ENCODE measurements at regions of chrX and their contacts with region 1.

Region 1: DNA sequence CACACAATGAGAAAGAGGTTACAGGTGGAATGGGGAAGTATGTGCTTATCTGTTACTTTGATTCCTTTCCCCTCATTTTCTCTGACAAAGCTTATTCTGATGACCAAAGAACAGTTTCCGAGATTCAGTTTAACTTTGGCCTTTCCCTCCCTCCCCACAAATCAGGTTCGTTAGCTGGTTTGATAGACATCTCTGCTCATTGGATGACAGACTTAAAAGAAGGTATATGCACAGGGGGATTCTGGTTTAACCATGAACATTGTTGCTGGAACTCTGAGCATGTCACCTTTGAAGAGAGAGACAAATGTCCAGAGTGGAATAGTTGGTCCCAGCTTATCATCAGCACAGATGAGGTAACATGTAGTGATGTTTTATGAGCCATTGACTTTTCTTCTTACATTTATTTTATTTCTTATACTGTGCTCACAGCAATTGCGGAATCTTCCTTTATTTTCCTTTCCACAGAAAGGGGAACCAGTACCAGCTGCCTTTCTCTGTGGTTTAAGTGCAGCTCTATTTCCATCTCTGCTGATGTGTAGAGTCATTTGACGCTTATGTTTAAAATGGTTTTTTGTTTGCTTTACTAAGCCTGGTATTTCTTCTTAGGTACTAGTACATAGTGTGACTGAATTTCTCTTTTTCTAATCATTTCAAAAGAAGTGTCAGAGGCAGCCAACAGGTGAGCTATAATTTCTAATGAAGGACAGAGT is 125.0 kb downstream of the AKAP4 start:
- DNase-seq: no peak
- ATAC-seq: peak in 1 of 4 donors; percentile 18
- H3K4me3 ChIP-seq: no peak overlapping the region
- H3K27ac ChIP-seq: no peak overlapping the region
- H3K4me1 ChIP-seq: no peaks in the 10 kb centered on the region
- H3K27me3 ChIP-seq: peaks cover 0 to 5% (median 0%) of the 10 kb centered on the region in 4 donors
- CTCF ChIP-seq: no peak

Region 2: GRCh38 chrX:49754233-49754857 is 321.4 kb before region 1 on chrX:
- intact Hi-C with region 1: no loop called
- DNase-seq: peak in 3 of 6 donors; percentile 6 to 36 (median 24)
- ATAC-seq: peak in 3 of 4 donors; percentile 74 to 86 (median 79)
- H3K4me3 ChIP-seq: no peak overlapping the region
- H3K27ac ChIP-seq: no peak overlapping the region
- H3K4me1 ChIP-seq: no peaks in the 10 kb centered on the region
- H3K27me3 ChIP-seq: peaks cover 0 to 38% (median 6%) of the 10 kb centered on the region in 4 donors
- CTCF ChIP-seq: peak; percentile 11 to 58 (median 40)

Region 3: DNA sequence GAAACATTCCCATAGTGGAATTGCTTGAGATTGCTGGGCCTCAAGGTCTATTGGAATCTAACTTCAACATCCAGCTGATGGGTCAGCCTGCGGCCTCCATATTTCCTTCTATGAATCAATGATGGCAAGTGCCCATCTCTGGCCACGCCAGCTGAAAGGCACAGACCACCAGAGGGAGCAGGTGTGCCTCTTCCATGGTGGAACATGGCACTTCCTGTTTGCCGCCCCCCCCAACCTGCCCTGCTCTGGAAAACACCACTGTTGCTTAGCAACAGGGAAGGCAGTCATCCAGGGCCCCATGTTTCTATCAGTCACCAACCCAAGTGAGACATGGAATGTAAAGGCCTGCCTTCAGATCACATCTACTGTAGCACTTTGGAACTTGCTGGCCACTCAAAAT is 235.1 kb before region 1 on chrX:
- intact Hi-C with region 1: no loop called
- DNase-seq: peak; percentile 76 to 86 (median 83)
- ATAC-seq: peak; percentile 84 to 97 (median 90)
- H3K4me3 ChIP-seq: no peak overlapping the region
- H3K27ac ChIP-seq: no peak overlapping the region
- H3K4me1 ChIP-seq: no peaks in the 10 kb centered on the region
- H3K27me3 ChIP-seq: peaks cover 0 to 19% (median 1%) of the 10 kb centered on the region in 4 donors
- CTCF ChIP-seq: peak in 3 of 4 donors; percentile 21 to 32 (median 29)

Region 4: DNA sequence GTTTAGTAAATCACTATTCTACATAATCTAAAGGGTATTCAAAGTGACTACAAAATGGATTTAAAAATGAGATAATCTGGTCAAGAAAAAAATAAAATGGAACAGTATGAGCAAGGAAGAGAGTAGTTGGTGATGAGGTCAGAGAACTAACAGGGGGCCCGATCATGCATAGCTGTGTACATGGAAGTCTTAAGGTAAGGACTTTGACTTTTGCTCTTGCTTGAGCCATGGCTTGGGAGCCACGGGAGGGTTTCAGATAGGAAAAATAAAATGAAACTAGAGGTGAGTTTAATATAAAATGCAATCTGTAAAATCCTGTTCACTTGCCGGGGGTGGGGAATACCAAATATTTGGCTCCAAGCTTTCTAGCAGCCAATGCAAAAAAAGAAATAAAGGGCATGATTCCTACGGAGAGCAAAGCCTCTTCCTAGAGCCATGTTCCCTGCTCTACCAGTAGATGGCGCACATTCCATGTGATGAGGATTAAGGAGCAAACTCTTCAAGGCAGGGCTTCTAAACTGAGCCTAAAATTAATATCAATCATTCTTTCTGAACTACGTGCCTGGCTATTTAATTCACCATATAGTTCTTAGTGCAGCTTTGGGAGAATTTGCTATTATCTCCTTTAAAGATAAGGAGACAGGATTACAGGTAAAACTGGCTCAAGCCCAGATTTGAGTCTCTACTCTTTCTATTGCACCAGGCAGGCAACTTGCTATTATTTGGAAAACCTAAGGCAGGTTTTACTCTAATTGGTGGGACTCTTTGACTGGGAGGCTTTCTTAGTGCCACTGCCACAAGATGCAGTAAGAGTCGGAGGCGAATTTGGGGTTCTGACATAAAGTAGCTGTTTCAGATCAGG is 160.2 kb before region 1 on chrX:
- intact Hi-C with region 1: loop called in 1 of 3 experiments (anchors 10 kb)
- DNase-seq: peak in 3 of 6 donors; percentile 21 to 47 (median 24)
- ATAC-seq: peak; percentile 53 to 92 (median 85)
- H3K4me3 ChIP-seq: no peak overlapping the region
- H3K27ac ChIP-seq: no peak overlapping the region
- H3K4me1 ChIP-seq: no peaks in the 10 kb centered on the region
- H3K27me3 ChIP-seq: no peaks in the 10 kb centered on the region
- CTCF ChIP-seq: peak; percentile 70 to 82 (median 73)

Measured in pancreas (tissue), 10 donors.